ENCODE measurements at regions of chr6 and their contacts with region 1.

Region 1: GRCh38 chr6:34196126-34196830 is 40.4 kb upstream of the HMGA1 start:
- DNase-seq: peak; percentile 57 to 69
- ATAC-seq: peak; percentile 97 to 98
- H3K4me3 ChIP-seq: peak overlapping the region; percentile 25; the same call in 2 of the 3 replicates
- H3K27ac ChIP-seq: peak overlapping the region; percentile 68 to 82
- H3K4me1 ChIP-seq: no peaks in the 10 kb centered on the region
- CTCF ChIP-seq: peak; percentile 85
- EP300 ChIP-seq: no peak
- POLR2A ChIP-seq: no peak
- RAD21 ChIP-seq: peak; percentile 84 to 93

Region 2: DNA sequence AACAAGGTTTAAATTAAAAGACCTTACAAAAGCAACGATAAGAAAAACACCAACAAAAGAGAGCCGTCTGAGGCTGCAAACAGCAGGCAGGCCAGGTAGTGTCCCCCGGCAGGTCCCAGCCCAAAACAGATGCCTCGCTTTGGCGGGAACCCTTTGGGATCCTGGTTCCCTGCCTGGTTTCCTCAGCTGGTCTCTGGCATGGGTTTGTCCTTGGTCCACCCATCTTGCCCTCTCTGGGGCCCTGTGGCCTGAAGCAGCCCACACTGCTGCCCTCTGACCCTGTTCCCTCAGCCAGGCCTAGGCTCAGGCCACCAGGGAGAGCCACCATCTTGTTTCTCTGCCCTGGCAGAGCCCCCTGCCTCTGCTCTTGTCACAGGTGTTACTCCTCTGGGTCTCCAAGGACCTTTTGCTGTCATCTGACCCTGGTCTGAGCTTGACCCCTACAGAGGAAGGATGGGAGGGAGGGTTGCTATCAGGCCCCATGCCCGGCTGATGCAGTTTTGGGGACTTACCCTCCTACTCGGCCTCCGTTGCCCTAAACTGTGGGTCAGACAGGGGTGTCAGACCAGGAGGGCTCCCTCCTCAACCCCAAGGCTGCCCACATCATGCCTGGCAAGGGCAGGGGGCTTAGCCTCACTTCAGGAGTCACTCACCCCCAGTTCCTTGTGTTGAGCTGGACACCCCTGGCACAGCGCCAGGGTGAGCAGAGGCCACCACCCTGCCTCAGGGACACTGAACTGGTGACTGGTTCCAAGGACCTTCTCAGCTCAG is 19.8 kb before region 1 on chr6:
- CTCF ChIA-PET with region 1: interaction called, 16 read pairs
- POLR2A ChIA-PET with region 1: no interaction called
- DNase-seq: no peak
- ATAC-seq: no peak
- H3K4me3 ChIP-seq: no peak overlapping the region
- H3K27ac ChIP-seq: no peak overlapping the region
- H3K4me1 ChIP-seq: no peaks in the 10 kb centered on the region
- CTCF ChIP-seq: no peak
- EP300 ChIP-seq: no peak
- POLR2A ChIP-seq: no peak
- RAD21 ChIP-seq: no peak

Region 3: DNA sequence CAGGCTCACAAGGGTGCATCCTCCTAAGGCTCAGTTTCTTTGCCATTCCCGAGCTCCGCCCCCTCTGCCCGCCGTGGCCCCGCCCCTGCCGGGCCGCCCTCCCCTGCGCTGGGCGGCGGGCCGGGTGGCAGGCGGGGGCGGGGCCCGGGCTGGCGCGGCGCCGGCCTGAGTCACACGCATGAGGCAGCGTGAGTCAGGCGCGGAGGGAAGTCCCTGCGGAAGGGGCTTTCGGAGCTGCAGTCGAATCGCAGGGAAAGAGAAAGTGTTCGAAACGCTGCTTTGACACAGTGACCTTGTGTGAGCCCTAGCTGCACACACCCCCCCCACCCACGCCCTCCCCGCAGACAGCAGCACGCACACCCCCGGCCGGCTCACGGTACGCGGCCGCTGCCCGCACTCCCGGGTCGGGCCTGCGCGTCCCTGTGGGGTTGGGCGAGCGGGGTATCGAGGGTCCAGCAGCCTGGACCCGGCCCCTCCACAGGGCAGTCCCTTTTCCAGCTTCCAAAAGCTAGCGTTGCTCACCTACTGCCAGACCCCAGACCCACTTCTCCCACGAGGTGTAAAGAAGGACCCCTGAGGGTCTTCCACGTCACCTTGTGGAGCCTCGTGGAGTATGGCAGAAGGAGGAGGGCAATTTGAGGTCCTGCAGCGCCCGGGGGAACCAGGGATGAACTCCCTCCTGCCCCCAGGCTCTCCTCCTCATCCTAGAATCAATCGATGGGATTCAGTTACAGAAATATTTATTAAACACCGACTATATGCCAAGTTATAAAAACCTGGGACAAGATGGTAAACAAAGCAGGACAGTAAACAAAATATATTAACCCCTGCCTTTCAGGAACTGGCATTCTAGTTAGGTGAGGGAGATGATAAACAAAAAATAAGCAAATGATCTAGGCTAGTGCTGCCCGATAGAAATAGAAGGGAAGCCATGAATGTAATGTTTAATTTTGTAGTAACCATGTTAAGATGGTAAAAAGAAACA is 28.0 kb after region 1 on chr6:
- CTCF ChIA-PET with region 1: interaction called, 20 read pairs
- POLR2A ChIA-PET with region 1: interaction called, 4 read pairs
- DNase-seq: peak; percentile 85 to 87
- ATAC-seq: peak; percentile 87 to 90
- H3K4me3 ChIP-seq: peak overlapping the region; percentile 49
- H3K27ac ChIP-seq: peak overlapping the region; percentile 90 to 98
- H3K4me1 ChIP-seq: peaks cover 20% of the 10 kb centered on the region
- CTCF ChIP-seq: no peak
- EP300 ChIP-seq: no peak; a peak in 1 of 5 replicates
- POLR2A ChIP-seq: peak; percentile 49
- RAD21 ChIP-seq: no peak

Region 4: GRCh38 chr6:34248727-34249551 is 52.7 kb after region 1 on chr6 and contains the start of gene SMIM29:
- CTCF ChIA-PET with region 1: interaction called, 27 read pairs
- POLR2A ChIA-PET with region 1: interaction called, 4 read pairs
- DNase-seq: peak; percentile 74 to 90
- ATAC-seq: peak; percentile 64 to 76
- H3K4me3 ChIP-seq: peak within 1 kb of the TSS; percentile 76
- H3K27ac ChIP-seq: peak within 1 kb of the TSS; percentile 92 to 93
- H3K4me1 ChIP-seq: peaks cover 41% of the 10 kb centered on the region
- CTCF ChIP-seq: peak; percentile 70
- EP300 ChIP-seq: no peak
- POLR2A ChIP-seq: peak; percentile 47
- RAD21 ChIP-seq: peak; percentile 58 to 88
- polyA plus RNA-seq, gene SMIM29: 8.1 and 11.0 TPM in 2 replicates

Region 5: DNA sequence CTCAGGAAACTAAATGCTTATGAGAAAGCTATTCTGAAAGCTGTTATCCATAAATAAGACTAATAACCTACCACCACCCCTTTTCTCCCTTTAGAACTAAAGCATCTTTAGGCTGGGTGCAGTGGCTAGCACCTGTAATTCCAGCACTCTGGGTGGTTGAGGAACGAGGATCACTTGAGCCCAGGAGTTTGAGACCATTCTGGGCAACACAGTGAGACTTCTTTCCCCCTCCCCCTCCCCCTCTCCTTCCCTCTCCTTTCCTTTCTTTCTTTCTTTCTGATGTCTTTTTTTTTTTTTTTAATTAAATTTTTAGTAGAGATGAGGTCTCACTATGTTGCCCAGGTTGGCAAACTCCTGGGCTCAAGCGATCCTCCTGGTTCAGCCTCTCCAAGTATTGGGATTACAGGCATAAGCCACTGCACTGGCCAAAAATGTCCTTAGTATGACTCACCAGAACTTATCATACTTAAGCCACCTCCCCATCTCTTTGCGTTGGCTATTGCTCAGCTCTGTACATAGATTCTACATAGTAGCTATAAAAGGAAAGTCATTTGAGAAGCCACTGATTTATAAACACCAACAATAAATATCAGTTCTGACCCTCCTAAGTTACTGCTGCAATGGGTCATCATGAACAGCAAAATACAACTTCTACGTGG is 414.7 kb after region 1 on chr6:
- CTCF ChIA-PET with region 1: interaction called, 26 read pairs
- POLR2A ChIA-PET with region 1: no interaction called
- DNase-seq: peak; percentile 11 to 69
- ATAC-seq: peak; percentile 78 to 80; a peak in 5 of 6 replicates
- H3K4me3 ChIP-seq: no peak overlapping the region
- H3K27ac ChIP-seq: peak overlapping the region; percentile 50 to 54; a peak in 4 of 6 replicates
- H3K4me1 ChIP-seq: peaks cover 31% of the 10 kb centered on the region
- CTCF ChIP-seq: no peak
- EP300 ChIP-seq: no peak
- POLR2A ChIP-seq: no peak
- RAD21 ChIP-seq: no peak

Region 6: GRCh38 chr6:34696189-34696738 is 500.0 kb after region 1 on chr6:
- CTCF ChIA-PET with region 1: no interaction called
- POLR2A ChIA-PET with region 1: no interaction called
- DNase-seq: no peak
- ATAC-seq: peak; percentile 69 to 81
- H3K4me3 ChIP-seq: peak overlapping the region; percentile 99
- H3K27ac ChIP-seq: peak overlapping the region; percentile 82 to 93
- H3K4me1 ChIP-seq: peaks cover 29% of the 10 kb centered on the region
- CTCF ChIP-seq: no peak
- EP300 ChIP-seq: no peak
- POLR2A ChIP-seq: no peak
- RAD21 ChIP-seq: no peak